Panc1 (cell line): ENCODE measurements at regions of chr6 and their contacts with region 1.

Region 1: DNA sequence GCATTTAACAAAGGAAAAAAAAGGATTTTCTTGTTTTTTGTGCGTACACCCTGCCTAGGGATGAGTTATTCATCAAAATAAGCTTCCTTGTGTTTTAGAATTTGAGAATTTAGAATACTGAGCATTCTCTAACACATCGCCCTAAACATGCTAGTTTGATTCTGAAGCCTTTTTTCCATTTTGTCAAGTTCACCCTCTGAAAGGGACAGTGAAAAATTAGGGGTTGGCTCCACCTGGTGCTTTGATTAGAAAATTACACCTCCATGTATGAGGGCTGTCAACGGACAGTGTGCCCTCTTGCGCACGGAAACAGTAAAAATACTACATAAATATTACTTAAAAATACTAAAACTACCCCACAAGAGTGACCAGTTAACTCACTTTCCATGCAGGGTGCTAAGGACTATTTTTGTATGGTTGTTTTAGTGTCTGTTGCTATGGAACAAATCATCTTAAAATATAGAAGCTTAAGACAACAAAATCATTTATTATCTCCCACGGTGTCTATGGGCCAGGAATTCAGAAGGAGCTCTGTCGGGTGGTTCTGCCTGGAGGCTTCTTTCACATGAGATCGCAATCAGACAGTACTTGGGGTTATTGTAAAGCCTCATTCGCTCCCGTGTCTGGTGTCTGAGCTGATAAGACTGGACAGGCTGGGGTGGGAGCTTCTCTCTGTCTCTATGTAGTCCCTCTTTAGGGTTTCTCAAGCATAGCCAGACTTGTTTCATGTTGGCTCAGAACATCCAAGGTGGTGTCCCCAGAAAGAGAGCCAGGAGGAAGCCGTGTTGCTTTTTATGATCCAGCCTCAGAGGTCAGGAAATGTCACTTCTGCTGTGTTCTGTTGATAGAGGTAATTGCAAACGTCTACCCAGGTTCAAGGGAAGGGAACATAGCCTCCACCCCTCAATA is 41.1 kb upstream of the TMEM170B start:
- DNase-seq: peak; percentile 72
- ATAC-seq: peak; percentile 90
- H3K4me3 ChIP-seq: no peak overlapping the region
- H3K27ac ChIP-seq: no peak overlapping the region
- H3K4me1 ChIP-seq: no peaks in the 10 kb centered on the region
- H3K27me3 ChIP-seq: no peaks in the 10 kb centered on the region; the same call in 1 of the 2 replicates
- CTCF ChIP-seq: peak; percentile 86

Region 2: GRCh38 chr6:11144393-11144851 is 352.0 kb before region 1 on chr6:
- CTCF ChIA-PET with region 1: interaction called, 7 read pairs
- POLR2A ChIA-PET with region 1: no interaction called
- in situ Hi-C with region 1: no loop called
- intact Hi-C with region 1: loop called (anchors 1 kb)
- DNase-seq: peak; percentile 54
- ATAC-seq: peak; percentile 92
- H3K4me3 ChIP-seq: no peak overlapping the region
- H3K27ac ChIP-seq: no peak overlapping the region
- H3K4me1 ChIP-seq: 0 out of 2 replicates have a peak, but pooled peaks cover 3% of the 10 kb centered on the region
- H3K27me3 ChIP-seq: no peaks in the 10 kb centered on the region
- CTCF ChIP-seq: peak; percentile 91

Region 3: GRCh38 chr6:11172501-11173332 is 323.7 kb before region 1 on chr6:
- CTCF ChIA-PET with region 1: interaction called, 3 read pairs
- POLR2A ChIA-PET with region 1: no interaction called
- in situ Hi-C with region 1: no loop called
- intact Hi-C with region 1: loop called (anchors 1 kb)
- DNase-seq: peak; percentile 43
- ATAC-seq: peak; percentile 75; the same call in 1 of the 2 replicates
- H3K4me3 ChIP-seq: no peak overlapping the region
- H3K27ac ChIP-seq: no peak overlapping the region
- H3K4me1 ChIP-seq: no peaks in the 10 kb centered on the region
- H3K27me3 ChIP-seq: no peaks in the 10 kb centered on the region
- CTCF ChIP-seq: peak; percentile 92

Region 4: DNA sequence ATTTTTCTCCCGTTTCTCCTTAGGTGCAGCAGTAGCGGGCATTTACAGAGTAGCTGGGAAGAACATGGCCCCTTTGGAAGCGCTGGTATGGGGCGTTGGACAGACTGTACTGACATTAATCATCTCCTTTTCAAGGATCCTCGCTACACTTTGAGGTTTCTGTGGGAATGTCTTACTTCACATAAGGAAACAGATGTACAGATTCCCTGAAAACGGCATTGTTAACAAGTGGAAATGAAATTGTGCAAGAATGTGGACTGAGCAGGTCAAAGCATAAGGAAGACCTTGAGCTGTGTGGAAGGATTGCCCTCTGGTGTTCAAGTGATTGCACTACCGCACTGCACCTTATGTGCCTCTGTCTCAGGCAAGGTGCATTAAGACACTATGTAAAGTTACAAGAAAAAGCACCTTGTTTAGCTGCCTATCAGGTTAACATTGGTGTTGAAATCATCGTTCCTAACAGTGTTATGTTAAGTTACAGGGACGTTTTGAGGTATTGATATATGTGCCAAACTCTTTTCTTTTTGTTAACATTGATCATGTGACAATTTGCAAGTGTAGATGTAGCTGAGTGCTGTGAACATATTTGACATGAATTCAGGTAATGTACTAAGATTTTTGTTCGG is 79.1 kb after region 1 on chr6:
- CTCF ChIA-PET with region 1: interaction called, 4 read pairs
- POLR2A ChIA-PET with region 1: no interaction called
- in situ Hi-C with region 1: no loop called
- intact Hi-C with region 1: loop called (anchors 2 kb)
- DNase-seq: peak; percentile 82
- ATAC-seq: peak; percentile 100
- H3K4me3 ChIP-seq: 0 out of 4 replicates have a peak overlapping the region, but pooled peaks of 1 of the 2 experiments have one; percentile 0
- H3K27ac ChIP-seq: no peak overlapping the region
- H3K4me1 ChIP-seq: no peaks in the 10 kb centered on the region
- H3K27me3 ChIP-seq: no peaks in the 10 kb centered on the region
- CTCF ChIP-seq: peak; percentile 94